ENCODE measurements at regions of chr5 and their contacts with region 1.

Region 1: GRCh38 chr5:145775411-145775810 is 59.7 kb downstream of the PRELID2 start:
- DNase-seq: no peak
- H3K4me3 Mint-ChIP-seq: no peak overlapping the region
- H3K27ac Mint-ChIP-seq: no peak overlapping the region
- H3K4me1 Mint-ChIP-seq: peaks cover 9% of the 10 kb centered on the region
- H3K27me3 Mint-ChIP-seq: no peaks in the 10 kb centered on the region
- CTCF ChIP-seq: no peak

Region 2: GRCh38 chr5:144308906-144309670 is 1466.3 kb before region 1 on chr5:
- CTCF ChIA-PET with region 1: interaction called, 11 read pairs
- intact Hi-C with region 1: no loop called
- DNase-seq: no peak
- H3K4me3 Mint-ChIP-seq: no peak overlapping the region
- H3K27ac Mint-ChIP-seq: no peak overlapping the region
- H3K4me1 Mint-ChIP-seq: no peaks in the 10 kb centered on the region
- H3K27me3 Mint-ChIP-seq: peaks cover 28% of the 10 kb centered on the region
- CTCF ChIP-seq: no peak

Region 3: GRCh38 chr5:145872486-145872885 is 97.1 kb after region 1 on chr5:
- CTCF ChIA-PET with region 1: no interaction called
- intact Hi-C with region 1: no loop called
- DNase-seq: no peak
- H3K4me3 Mint-ChIP-seq: no peak overlapping the region
- H3K27ac Mint-ChIP-seq: no peak overlapping the region
- H3K4me1 Mint-ChIP-seq: no peaks in the 10 kb centered on the region
- H3K27me3 Mint-ChIP-seq: no peaks in the 10 kb centered on the region
- CTCF ChIP-seq: no peak

Measured in Calu3 (cell line).